Stomach (tissue), 19 donors: ENCODE measurements at regions of chr14 and their contacts with region 1.

Region 1: GRCh38 chr14:33839193-33840076 is 111.4 kb downstream of the EGLN3 start:
- DNase-seq: peak; percentile 54 to 81
- H3K4me3 ChIP-seq: no peak overlapping the region
- H3K27ac ChIP-seq: no peak overlapping the region
- H3K4me1 ChIP-seq: peaks cover 0 to 24% (median 9%) of the 10 kb centered on the region in 4 donors
- H3K27me3 ChIP-seq: no peaks in the 10 kb centered on the region
- CTCF ChIP-seq: peak in 5 of 7 experiments; percentile 64 to 80 (median 74)
- EP300 ChIP-seq: no peak
- POLR2A ChIP-seq: no peak

Region 2: DNA sequence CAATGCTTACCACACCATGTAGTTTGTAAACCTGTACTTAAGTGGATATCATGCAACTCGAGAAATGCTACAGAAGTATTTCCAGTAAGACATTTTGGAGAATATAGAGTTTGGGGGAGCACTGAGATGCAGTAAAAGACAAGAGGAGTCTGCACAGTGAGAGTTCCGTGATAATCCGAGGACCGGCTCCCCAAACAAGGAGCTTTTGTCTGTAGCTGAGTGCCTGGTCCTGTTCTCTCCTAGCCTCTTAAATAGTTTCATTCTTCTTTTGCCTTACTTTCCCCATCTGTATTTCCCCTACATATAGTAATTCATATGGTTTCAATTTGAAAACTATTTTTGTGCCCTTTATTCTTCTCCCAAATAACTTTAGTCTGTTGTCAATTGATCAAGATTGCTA is 252.6 kb before region 1 on chr14:
- intact Hi-C with region 1: no loop called
- DNase-seq: no peak
- H3K4me3 ChIP-seq: no peak overlapping the region
- H3K27ac ChIP-seq: no peak overlapping the region
- H3K4me1 ChIP-seq: no peaks in the 10 kb centered on the region
- H3K27me3 ChIP-seq: no peaks in the 10 kb centered on the region
- CTCF ChIP-seq: no peak
- EP300 ChIP-seq: no peak
- POLR2A ChIP-seq: no peak

Region 3: GRCh38 chr14:33897878-33898535 is 58.6 kb after region 1 on chr14:
- intact Hi-C with region 1: no loop called
- DNase-seq: peak in 1 of 2 donors; percentile 31
- H3K4me3 ChIP-seq: no peak overlapping the region
- H3K27ac ChIP-seq: no peak overlapping the region
- H3K4me1 ChIP-seq: peaks cover 0 to 3% (median 0%) of the 10 kb centered on the region in 4 donors
- H3K27me3 ChIP-seq: no peaks in the 10 kb centered on the region
- CTCF ChIP-seq: no peak
- EP300 ChIP-seq: no peak
- POLR2A ChIP-seq: no peak

Region 4: DNA sequence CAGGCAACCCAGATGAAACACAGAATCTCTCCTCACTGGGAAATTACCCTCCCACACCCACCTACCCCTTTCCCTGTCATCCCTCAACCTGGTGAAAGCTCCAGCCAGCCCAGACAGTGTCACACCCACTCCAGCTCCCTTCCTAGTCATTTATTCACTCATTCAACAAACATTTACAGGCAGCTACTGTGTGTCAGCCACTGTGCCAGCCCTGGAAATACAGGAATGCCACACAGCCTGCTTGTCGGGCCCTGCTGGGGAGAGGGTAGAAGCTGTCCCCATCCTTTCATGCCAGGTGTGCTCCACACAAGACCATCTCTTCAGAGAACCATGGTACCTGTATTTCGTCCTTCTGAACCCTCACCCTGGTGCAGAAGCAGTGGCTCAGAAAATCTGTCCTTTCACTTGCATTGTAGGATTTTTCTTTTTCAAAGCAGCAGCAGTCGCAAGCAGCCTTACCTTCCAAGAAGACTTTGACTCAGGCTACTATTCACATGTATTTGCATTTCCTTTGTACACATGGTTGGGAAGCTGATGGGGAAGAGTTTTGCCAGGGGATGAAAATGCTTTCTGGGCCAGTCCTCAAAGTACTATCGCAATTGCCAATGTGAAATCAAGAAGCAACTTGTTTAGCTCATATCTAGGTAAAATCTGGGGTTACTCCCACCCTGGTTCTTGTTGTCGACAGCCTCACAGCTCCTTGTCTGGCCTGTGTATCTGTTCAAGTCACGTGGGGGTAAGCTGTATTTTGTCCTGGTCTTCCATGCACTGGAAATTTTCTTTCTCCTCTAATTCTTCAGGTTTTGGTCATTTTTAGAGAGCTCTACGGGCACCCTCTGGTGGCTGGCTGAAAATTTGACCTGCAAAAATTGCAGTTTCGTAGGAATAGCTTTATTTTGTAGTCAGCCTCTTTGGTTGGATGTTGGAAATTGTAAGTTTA is 258.9 kb after region 1 on chr14:
- intact Hi-C with region 1: loop called (anchors 10 kb)
- DNase-seq: peak; percentile 46 to 78
- H3K4me3 ChIP-seq: no peak overlapping the region
- H3K27ac ChIP-seq: peak overlapping the region; percentile 1 to 28 (median 11)
- H3K4me1 ChIP-seq: peaks cover 12 to 25% (median 15%) of the 10 kb centered on the region in 4 donors
- H3K27me3 ChIP-seq: no peaks in the 10 kb centered on the region
- CTCF ChIP-seq: peak in 5 of 7 experiments; percentile 28 to 68 (median 57)
- EP300 ChIP-seq: no peak
- POLR2A ChIP-seq: no peak

Region 5: DNA sequence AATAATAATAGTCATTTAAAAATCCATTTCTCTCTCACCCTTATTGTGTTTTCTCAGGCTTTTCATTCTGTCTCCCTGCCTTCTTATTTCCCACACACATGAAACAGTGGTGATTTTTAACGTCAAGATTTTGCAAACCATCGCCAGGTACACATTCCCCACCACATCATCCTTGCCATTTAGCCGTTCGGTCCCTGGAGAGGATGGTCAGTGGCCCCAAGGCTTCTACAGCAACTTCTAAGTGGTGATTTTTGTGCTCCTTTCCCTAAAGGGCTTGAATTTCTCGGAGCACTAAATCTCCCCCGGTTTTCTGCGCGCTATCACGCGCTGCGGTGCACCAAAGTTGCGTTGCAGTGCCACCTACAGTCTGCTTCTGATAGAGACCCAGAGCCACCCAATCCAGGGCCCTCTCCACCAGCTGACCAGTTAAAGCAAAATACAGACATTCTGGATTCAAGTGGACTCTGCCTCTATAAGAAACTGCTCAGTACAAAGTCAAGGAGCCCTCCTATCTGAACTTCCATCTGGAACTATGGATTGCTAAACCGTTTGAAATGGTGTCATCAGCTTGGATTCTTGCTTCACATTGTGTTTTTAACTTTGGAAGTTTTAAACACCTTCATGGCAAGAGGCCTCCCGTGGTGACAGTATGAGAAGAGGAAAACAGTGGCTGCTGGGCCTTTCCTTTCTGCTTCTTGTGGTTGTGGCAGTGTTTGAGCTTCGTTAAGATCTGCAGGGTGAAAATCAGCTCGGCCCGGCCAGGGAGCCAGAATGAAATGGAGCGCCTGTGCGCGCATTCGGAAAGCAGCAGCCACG is 388.6 kb after region 1 on chr14:
- intact Hi-C with region 1: loop called (anchors 5 kb)
- DNase-seq: peak; percentile 72 to 90
- H3K4me3 ChIP-seq: peak overlapping the region in 2 of 4 donors; percentile 12 to 18
- H3K27ac ChIP-seq: peak overlapping the region in 1 of 5 donors; percentile 59
- H3K4me1 ChIP-seq: peaks cover 7 to 43% (median 19%) of the 10 kb centered on the region in 4 donors
- H3K27me3 ChIP-seq: no peaks in the 10 kb centered on the region
- CTCF ChIP-seq: peak in 5 of 7 experiments; percentile 68 to 81 (median 73)
- EP300 ChIP-seq: no peak
- POLR2A ChIP-seq: no peak

Region 6: DNA sequence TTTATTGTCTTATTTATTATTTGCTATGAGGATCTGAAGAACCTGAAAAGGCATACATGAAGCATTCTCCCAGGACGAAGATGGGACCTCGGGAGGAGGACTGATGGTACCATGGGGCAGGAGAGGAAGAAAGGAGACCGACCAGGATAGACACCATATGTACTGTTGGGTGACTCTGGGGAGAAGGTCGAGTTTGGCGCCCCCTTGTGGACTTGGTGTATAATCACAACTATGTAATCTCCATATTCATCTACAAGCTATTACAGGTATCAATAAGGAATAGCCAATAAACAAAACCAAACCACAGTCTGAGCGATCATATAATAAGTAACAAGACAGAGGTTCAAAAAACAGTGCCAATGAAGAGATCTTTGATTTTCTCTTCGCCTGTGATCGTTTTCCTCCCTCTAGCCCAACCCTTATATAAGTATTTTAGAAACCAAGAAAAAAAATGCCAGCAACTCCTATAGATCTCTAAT is 483.5 kb after region 1 on chr14:
- intact Hi-C with region 1: loop called (anchors 10 kb)
- DNase-seq: peak; percentile 59 to 77
- H3K4me3 ChIP-seq: no peak overlapping the region
- H3K27ac ChIP-seq: no peak overlapping the region
- H3K4me1 ChIP-seq: peaks cover 6 to 22% (median 12%) of the 10 kb centered on the region in 4 donors
- H3K27me3 ChIP-seq: no peaks in the 10 kb centered on the region
- CTCF ChIP-seq: peak in 5 of 7 experiments; percentile 31 to 79 (median 49)
- EP300 ChIP-seq: no peak
- POLR2A ChIP-seq: no peak